MCF 10A (cell line): ENCODE measurements at regions of chr1 and their contacts with region 1.

Region 1: DNA sequence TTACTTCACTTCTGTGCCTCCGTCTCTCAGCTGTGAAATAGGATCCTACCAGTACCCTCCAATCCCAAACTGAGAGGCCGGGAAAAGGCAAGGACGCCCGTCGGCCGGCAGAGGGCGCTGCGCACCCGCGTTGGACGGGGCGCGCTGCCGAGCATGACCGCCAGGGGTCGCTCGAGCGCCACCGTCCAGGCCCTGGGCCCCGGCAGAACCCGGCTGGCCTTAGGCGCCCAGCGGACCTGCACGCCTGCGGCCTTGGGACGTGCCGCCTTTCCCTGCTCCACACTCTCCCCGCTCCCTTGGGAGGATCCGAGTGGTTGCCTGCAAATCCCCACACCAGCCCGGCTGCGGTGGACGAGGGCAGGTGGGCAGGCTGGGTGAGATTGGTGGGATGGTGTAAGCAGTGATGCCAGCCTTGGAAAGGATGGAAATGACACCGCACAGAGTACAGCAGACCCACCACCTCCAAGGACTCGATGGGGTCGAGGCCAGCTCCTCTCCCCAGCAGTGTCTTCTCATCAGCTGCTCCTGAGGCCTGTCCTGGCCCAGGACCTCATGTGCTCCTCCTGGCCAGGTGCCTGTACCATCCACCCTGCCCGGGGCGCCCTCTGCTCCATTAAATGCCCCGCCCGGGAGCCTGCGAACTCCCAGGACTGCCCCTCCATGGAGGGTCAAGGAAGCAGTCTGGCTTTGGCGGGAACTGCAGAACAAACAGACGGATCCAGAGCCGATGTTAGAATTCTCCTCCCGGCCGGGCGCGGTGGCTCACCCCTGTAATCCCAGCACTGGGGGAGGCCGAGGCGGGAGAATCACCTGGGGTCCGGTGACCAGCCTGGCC is 47.4 kb upstream of the LBR start:
- DNase-seq: peak; percentile 85
- H3K4me3 Mint-ChIP-seq: no peak overlapping the region
- H3K27ac Mint-ChIP-seq: no peak overlapping the region
- H3K4me1 Mint-ChIP-seq: no peaks in the 10 kb centered on the region
- H3K27me3 Mint-ChIP-seq: no peaks in the 10 kb centered on the region
- CTCF ChIP-seq: peak; percentile 100

Region 2: DNA sequence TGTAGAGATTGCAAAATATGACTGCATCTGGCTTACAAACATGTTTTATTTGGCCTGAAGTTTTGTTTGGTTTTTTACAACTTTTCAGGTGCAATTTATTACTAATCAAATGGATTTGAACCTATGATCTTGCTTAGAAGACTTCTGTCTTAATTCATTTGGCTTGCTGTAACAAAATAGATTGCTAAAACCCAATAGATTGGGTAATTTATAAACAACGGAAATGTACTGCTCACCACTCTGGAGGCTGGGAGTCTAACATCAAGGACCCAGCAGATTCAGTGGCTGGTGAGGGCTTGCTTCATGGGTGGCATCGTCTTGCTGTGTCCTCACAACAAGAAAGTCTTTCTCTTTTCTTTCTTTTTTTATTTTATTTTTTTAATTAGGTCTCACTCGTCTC is 120.3 kb before region 1 on chr1:
- CTCF ChIA-PET with region 1: no interaction called
- POLR2A ChIA-PET with region 1: no interaction called
- intact Hi-C with region 1: no loop called
- DNase-seq: peak; percentile 87
- H3K4me3 Mint-ChIP-seq: no peak overlapping the region
- H3K27ac Mint-ChIP-seq: peak overlapping the region; percentile 63
- H3K4me1 Mint-ChIP-seq: peaks cover 33% of the 10 kb centered on the region
- H3K27me3 Mint-ChIP-seq: no peaks in the 10 kb centered on the region
- CTCF ChIP-seq: no peak

Region 3: DNA sequence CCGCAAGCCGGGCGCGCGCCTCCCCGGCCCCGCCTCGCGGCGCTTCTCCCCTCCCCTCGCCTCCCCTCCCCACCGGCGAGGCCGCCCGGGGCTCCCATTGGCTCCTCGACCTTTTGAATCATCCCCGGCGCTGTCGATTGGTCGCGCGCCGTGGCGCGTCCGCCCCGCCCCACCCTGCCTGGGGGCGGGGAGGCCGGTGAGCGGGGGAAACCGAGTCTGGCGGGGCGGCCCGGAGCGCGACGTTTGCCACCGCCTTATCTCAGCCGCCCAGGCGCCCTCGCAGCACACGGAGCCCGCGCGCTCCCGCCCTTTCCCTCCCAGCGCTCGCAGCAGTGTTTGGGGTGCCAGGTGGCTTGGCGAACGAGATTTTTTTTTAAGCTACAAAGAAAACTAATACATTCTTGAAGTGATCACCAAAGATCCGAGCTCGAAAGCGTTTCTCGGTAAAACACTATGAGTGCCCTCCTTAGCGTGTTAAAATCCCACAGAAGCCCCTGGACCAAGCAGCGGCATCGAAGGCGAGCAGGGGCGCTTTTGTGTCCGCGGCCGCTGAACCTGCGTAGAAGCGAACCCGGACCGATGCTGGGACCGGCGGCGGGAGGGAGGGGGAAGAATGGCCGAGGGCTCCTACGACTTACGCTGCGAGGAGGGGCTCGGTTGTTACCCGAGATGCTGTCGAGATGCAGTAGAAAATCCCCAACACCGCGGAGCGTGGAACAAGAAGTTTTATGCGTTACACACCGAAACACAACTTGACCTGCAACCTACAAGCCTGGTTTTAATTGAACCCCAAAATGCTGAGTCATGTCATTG is 46.9 kb before region 1 on chr1:
- CTCF ChIA-PET with region 1: interaction called, 12 read pairs
- POLR2A ChIA-PET with region 1: no interaction called
- intact Hi-C with region 1: no loop called
- DNase-seq: peak; percentile 99
- H3K4me3 Mint-ChIP-seq: peak overlapping the region; percentile 75
- H3K27ac Mint-ChIP-seq: peak overlapping the region; percentile 20
- H3K4me1 Mint-ChIP-seq: peaks cover 35% of the 10 kb centered on the region
- H3K27me3 Mint-ChIP-seq: no peaks in the 10 kb centered on the region
- CTCF ChIP-seq: no peak

Region 4: DNA sequence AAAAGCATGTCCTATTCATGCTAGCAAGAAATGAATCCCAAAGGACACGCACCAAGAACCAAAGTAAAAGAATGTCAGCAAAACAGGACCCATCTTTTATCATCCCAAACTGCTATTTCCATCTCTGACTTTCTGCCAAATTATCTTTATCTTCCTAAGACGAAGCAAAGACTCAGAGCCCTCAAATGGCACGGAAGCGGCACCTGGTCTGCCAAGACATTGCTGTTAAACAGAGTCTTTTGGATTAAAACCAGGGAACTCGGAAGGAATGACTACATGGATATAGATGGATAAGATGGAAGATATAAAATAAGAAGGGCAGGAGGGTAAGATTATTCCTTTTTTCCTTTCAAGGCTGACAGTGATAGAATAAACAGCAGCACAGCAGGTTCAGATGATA is 13.5 kb after region 1 on chr1:
- CTCF ChIA-PET with region 1: interaction called, 129 read pairs
- POLR2A ChIA-PET with region 1: interaction called, 8 read pairs
- intact Hi-C with region 1: no loop called
- DNase-seq: no peak
- H3K4me3 Mint-ChIP-seq: no peak overlapping the region
- H3K27ac Mint-ChIP-seq: no peak overlapping the region
- H3K4me1 Mint-ChIP-seq: no peaks in the 10 kb centered on the region
- H3K27me3 Mint-ChIP-seq: no peaks in the 10 kb centered on the region
- CTCF ChIP-seq: no peak

Region 5: GRCh38 chr1:225517697-225518096 is 42.5 kb after region 1 on chr1:
- CTCF ChIA-PET with region 1: interaction called, 15 read pairs
- POLR2A ChIA-PET with region 1: interaction called, 3 read pairs
- intact Hi-C with region 1: no loop called
- DNase-seq: no peak
- H3K4me3 Mint-ChIP-seq: no peak overlapping the region
- H3K27ac Mint-ChIP-seq: no peak overlapping the region
- H3K4me1 Mint-ChIP-seq: peaks cover 5% of the 10 kb centered on the region
- H3K27me3 Mint-ChIP-seq: no peaks in the 10 kb centered on the region
- CTCF ChIP-seq: no peak

Region 6: GRCh38 chr1:225688345-225688744 is 213.1 kb after region 1 on chr1:
- CTCF ChIA-PET with region 1: no interaction called
- POLR2A ChIA-PET with region 1: no interaction called
- intact Hi-C with region 1: no loop called
- DNase-seq: no peak
- H3K4me3 Mint-ChIP-seq: no peak overlapping the region
- H3K27ac Mint-ChIP-seq: no peak overlapping the region
- H3K4me1 Mint-ChIP-seq: peaks cover 11% of the 10 kb centered on the region
- H3K27me3 Mint-ChIP-seq: no peaks in the 10 kb centered on the region
- CTCF ChIP-seq: no peak

Region 7: DNA sequence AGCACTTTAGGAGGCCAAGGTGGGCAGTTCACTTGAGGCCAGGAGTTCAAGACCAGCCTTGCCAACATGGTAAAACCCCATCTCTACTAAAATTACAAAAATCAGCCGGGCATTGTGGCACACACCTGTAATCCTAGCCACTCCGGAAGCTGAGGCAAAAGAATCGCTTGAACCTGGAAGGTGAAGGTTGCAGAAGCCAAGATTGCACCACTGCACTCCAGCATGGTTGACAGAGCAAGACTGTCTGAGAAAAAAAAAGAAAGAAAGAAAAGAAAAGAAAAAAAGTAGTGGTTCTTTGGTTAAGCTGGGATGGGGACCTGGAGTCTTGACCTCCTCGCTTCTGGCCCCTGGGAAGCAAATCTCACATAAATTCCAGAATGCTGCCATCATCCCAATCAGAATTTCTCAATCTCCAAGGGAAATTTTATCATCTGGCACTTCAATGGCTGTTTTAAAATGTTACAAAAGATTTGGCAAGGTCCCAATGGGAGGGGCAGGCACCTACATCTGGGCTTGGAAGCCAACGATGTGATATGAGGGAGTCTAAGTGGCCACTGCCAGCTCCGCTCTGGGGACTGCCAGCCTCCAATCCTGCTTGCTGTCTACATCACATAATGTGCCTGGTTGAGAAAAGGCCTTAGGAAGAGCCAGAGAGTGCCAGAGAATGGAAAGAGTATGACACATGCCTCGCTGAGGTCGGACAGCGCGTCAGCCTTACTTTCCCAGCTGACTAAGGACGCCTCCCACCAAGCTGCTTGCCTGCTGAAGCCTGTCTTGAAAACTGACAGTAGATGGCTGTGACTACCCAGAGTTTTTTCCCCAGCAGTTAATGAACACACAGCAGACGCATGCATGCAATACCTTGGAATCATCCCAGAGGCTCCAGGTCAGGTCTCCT is 260.3 kb after region 1 on chr1:
- CTCF ChIA-PET with region 1: interaction called, 21 read pairs
- POLR2A ChIA-PET with region 1: interaction called, 7 read pairs
- intact Hi-C with region 1: no loop called
- DNase-seq: peak; percentile 100
- H3K4me3 Mint-ChIP-seq: peak overlapping the region; percentile 60
- H3K27ac Mint-ChIP-seq: peak overlapping the region; percentile 89
- H3K4me1 Mint-ChIP-seq: peaks cover 33% of the 10 kb centered on the region
- H3K27me3 Mint-ChIP-seq: no peaks in the 10 kb centered on the region
- CTCF ChIP-seq: peak; percentile 9

Region 8: GRCh38 chr1:225851805-225852204 is 376.6 kb after region 1 on chr1:
- CTCF ChIA-PET with region 1: interaction called, 58 read pairs
- POLR2A ChIA-PET with region 1: interaction called, 3 read pairs
- intact Hi-C with region 1: no loop called
- DNase-seq: no peak
- H3K4me3 Mint-ChIP-seq: no peak overlapping the region
- H3K27ac Mint-ChIP-seq: no peak overlapping the region
- H3K4me1 Mint-ChIP-seq: no peaks in the 10 kb centered on the region
- H3K27me3 Mint-ChIP-seq: no peaks in the 10 kb centered on the region
- CTCF ChIP-seq: no peak

Region 9: DNA sequence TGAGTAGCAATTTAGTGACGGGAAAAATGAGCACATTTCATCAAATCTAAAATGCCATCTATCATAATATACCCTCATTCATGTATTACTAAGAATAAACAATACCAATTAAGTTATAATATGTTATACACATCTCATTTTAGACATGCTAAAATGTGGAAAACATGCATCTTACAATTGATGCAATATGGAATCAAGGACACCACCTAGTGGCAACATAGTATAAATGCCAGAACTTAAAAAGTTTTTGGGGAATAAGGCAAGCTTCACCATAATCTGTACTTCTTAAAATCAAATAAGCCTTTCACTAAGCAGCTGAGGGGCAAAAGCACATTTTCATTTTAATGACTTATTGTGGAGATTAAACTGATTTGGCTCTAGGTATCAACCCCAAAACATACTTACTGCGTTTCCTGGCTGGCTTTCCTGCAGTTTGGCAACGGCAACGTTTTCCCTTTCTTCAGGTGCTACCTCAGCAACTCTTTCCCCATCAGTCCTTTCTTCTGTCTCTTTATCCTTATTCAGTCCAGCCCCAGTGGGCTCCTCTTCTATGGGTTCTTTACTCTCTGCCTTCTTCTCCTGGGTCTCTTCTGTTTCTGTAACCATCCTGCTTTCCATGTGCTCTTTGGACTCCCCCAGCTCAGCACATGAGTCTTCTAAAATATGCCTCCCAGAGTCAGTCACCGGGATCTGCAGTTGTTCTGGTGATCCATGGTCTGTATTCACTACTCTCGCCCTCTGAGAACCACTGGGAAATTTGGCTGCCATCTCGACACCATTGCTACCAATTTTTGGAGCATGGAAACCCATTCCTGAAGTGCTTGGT is 512.5 kb after region 1 on chr1:
- CTCF ChIA-PET with region 1: interaction called, 572 read pairs
- POLR2A ChIA-PET with region 1: interaction called, 4 read pairs
- intact Hi-C with region 1: loop called (anchors 1 kb)
- DNase-seq: peak; percentile 77
- H3K4me3 Mint-ChIP-seq: no peak overlapping the region
- H3K27ac Mint-ChIP-seq: no peak overlapping the region
- H3K4me1 Mint-ChIP-seq: peaks cover 6% of the 10 kb centered on the region
- H3K27me3 Mint-ChIP-seq: no peaks in the 10 kb centered on the region
- CTCF ChIP-seq: peak; percentile 89